Mammary epithelial cell (primary cell): ENCODE measurements at regions of chr9 and their contacts with region 1.

Region 1: GRCh38 chr9:109520478-109521132 is 22.5 kb upstream of the PTPN3 start:
- DNase-seq: peak; percentile 81
- H3K4me3 ChIP-seq: no peak overlapping the region
- H3K27ac ChIP-seq: peak overlapping the region; percentile 9
- H3K4me1 ChIP-seq: peaks cover 11% of the 10 kb centered on the region
- H3K27me3 ChIP-seq: no peaks in the 10 kb centered on the region
- CTCF ChIP-seq: peak; percentile 93 to 98

Region 2: GRCh38 chr9:109401168-109401989 is 119.2 kb before region 1 on chr9:
- CTCF ChIA-PET with region 1: no interaction called
- dilution Hi-C with region 1: no loop called
- in situ Hi-C with region 1: no loop called
- intact Hi-C with region 1: loop called (anchors 2 kb)
- DNase-seq: peak; percentile 53
- H3K4me3 ChIP-seq: no peak overlapping the region
- H3K27ac ChIP-seq: no peak overlapping the region
- H3K4me1 ChIP-seq: no peaks in the 10 kb centered on the region
- H3K27me3 ChIP-seq: no peaks in the 10 kb centered on the region
- CTCF ChIP-seq: peak; percentile 88 to 94

Region 3: GRCh38 chr9:109560457-109561132 is 40.0 kb after region 1 on chr9:
- CTCF ChIA-PET with region 1: no interaction called
- dilution Hi-C with region 1: no loop called
- in situ Hi-C with region 1: no loop called
- intact Hi-C with region 1: loop called (anchors 1 kb)
- DNase-seq: no peak
- H3K4me3 ChIP-seq: no peak overlapping the region
- H3K27ac ChIP-seq: no peak overlapping the region
- H3K4me1 ChIP-seq: peaks cover 24% of the 10 kb centered on the region
- H3K27me3 ChIP-seq: no peaks in the 10 kb centered on the region
- CTCF ChIP-seq: peak; percentile 32 to 49

Region 4: DNA sequence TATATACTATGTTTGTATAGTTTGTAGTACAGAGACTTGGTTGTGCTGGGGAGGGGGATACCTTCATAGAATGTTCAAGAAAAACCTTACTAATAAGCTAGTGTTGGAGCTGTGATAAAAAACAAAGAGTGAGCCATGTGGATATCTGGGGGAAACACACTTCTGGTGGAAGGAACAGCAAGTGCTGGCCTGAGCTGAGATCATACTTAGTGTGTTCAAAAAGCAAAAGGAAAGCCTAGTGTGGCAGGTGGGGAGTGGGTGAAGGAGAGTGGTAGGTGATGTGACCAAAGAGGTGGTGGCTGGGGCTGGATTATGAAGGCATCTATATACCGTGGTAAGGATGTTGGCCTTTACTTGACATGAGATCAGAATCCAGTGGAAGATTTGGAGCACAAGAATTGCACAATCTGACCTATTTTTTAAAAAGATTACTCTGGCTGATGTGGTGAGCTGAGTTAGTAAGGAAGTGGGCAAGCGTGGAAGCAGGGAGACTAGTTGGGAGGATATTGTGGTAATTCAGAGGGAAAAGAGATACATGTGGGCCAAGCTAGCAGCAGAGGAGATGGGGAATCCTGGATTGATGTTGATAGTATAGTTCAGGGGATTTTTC is 286.0 kb after region 1 on chr9:
- CTCF ChIA-PET with region 1: no interaction called
- dilution Hi-C with region 1: no loop called
- in situ Hi-C with region 1: no loop called
- intact Hi-C with region 1: no loop called
- DNase-seq: peak; percentile 8
- H3K4me3 ChIP-seq: no peak overlapping the region
- H3K27ac ChIP-seq: no peak overlapping the region
- H3K4me1 ChIP-seq: peaks cover 11% of the 10 kb centered on the region
- H3K27me3 ChIP-seq: no peaks in the 10 kb centered on the region
- CTCF ChIP-seq: no peak